ENCODE measurements at regions of chr17 and their contacts with region 1.

Region 1: GRCh38 chr17:59311130-59311920 is 20.1 kb upstream of the YPEL2 start:
- DNase-seq: peak; percentile 49 to 70
- H3K4me3 ChIP-seq: no peak overlapping the region
- H3K4me3 Mint-ChIP-seq: no peak overlapping the region
- H3K27ac Mint-ChIP-seq: no peak overlapping the region
- H3K4me1 ChIP-seq: no peaks in the 10 kb centered on the region
- H3K4me1 Mint-ChIP-seq: no peaks in the 10 kb centered on the region
- H3K27me3 ChIP-seq: no peaks in the 10 kb centered on the region
- H3K27me3 Mint-ChIP-seq: peaks cover 2% of the 10 kb centered on the region
- CTCF ChIP-seq: peak; percentile 83

Region 2: GRCh38 chr17:59220376-59221158 is 90.8 kb before region 1 on chr17 and contains the start of gene GDPD1:
- CTCF ChIA-PET with region 1: interaction called, 5 read pairs
- POLR2A ChIA-PET with region 1: no interaction called
- intact Hi-C with region 1: loop called (anchors 1 kb)
- DNase-seq: peak; percentile 95 to 99
- H3K4me3 ChIP-seq: peak within 1 kb of the TSS; percentile 51
- H3K4me3 Mint-ChIP-seq: peak within 1 kb of the TSS; percentile 95
- H3K27ac Mint-ChIP-seq: peak within 1 kb of the TSS; percentile 88
- H3K4me1 ChIP-seq: no peaks in the 10 kb centered on the region
- H3K4me1 Mint-ChIP-seq: no peaks in the 10 kb centered on the region
- H3K27me3 ChIP-seq: no peaks in the 10 kb centered on the region
- H3K27me3 Mint-ChIP-seq: no peaks in the 10 kb centered on the region
- CTCF ChIP-seq: peak; percentile 53 to 54
- total RNA-seq, gene GDPD1: 1.2 and 2.9 TPM in 2 replicates

Region 3: DNA sequence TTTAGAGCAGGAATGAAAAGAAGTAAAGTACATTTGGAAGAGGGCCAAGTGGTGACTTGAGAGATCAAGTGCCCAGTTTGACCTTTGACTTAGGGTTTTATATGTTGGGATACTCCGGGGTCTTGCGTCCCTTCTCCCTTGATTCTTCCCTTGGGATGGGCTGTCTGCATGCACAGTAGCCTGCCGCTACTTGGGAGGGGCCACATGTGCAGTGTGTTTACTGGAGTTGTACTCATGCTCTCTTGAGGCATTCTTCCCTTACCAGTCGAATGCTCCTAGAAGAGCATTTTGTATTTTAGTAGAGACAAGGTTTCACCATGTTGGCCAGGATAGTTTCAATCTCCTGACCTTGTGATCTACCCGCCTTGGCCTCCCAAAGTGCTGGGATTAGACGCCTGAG is 67.2 kb before region 1 on chr17:
- CTCF ChIA-PET with region 1: interaction called, 12 read pairs
- POLR2A ChIA-PET with region 1: no interaction called
- intact Hi-C with region 1: no loop called
- DNase-seq: no peak
- H3K4me3 ChIP-seq: no peak overlapping the region
- H3K4me3 Mint-ChIP-seq: no peak overlapping the region
- H3K27ac Mint-ChIP-seq: no peak overlapping the region
- H3K4me1 ChIP-seq: no peaks in the 10 kb centered on the region
- H3K4me1 Mint-ChIP-seq: no peaks in the 10 kb centered on the region
- H3K27me3 ChIP-seq: no peaks in the 10 kb centered on the region
- H3K27me3 Mint-ChIP-seq: peaks cover 3% of the 10 kb centered on the region
- CTCF ChIP-seq: no peak

Region 4: DNA sequence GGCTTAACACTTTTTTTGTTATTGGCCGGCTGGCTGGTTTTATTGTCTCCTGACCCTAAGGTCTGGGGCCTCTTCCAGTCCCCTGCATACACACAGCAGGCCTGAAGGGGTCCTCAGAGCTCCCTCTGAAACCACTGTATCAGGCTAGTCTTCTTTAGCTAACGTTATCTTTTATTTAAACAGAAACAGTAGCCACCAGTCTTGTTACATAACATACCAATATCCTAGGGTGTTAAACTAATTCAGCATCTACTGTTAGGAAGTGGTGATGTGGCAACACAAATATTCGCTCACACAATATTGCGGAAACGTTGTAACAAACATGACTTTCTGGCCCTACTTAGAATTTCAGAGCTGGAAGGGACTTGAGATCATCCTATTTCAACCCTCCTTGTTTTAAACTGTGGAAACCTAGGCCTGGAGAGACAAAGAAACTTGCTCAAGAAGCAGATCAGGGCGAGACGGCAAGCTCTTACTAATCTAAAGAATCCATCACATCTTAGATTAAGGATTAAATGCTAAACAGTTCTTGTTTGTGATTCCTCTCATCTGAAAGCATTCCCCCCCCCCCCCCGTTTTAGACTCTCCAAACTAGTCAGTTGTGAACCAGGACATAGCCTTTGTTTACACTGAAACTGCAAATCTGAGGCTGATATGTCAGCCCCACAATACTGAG is 18.5 kb after region 1 on chr17:
- CTCF ChIA-PET with region 1: interaction called, 26 read pairs
- POLR2A ChIA-PET with region 1: interaction called, 3 read pairs
- intact Hi-C with region 1: loop called (anchors 1 kb)
- DNase-seq: peak; percentile 80 to 82
- H3K4me3 ChIP-seq: peak overlapping the region; percentile 90
- H3K4me3 Mint-ChIP-seq: peak overlapping the region; percentile 73
- H3K27ac Mint-ChIP-seq: peak overlapping the region; percentile 29
- H3K4me1 ChIP-seq: peaks cover 21% of the 10 kb centered on the region
- H3K4me1 Mint-ChIP-seq: peaks cover 26% of the 10 kb centered on the region
- H3K27me3 ChIP-seq: no peaks in the 10 kb centered on the region
- H3K27me3 Mint-ChIP-seq: peaks cover 4% of the 10 kb centered on the region
- CTCF ChIP-seq: peak; percentile 89 to 92

Region 5: DNA sequence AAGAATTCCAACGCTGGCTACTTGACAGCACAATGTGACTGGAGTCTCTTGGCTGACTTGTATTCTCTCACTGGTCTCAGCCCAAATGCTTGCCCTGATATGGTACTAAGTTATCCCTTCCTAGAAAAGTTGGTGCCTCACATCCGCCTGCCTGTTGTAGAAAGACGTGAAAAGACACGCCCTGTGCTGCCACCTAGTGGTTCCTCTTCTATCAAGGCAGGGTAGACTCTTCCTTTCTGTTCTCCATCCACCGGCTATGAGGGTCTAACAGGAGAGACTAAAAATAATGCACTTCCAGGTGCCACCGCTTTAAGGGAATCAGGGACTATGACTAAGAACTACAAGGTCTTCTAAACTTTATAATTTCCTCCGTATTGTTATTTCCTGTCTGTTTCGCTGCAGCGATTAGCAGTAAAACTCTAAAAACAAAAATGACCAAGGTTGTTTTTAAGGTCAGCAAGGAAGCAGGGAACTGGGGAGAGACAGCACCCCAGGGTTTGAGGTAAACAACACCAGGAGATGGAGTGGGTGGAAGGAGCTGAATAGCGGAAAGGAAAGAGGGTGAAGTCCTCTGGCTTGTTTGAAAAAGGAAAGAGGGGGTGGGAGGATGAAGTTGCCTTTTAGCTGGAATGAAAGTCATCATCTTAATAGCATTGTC is 129.6 kb after region 1 on chr17:
- CTCF ChIA-PET with region 1: interaction called, 29 read pairs
- POLR2A ChIA-PET with region 1: no interaction called
- intact Hi-C with region 1: loop called (anchors 1 kb)
- DNase-seq: peak; percentile 87 to 89
- H3K4me3 ChIP-seq: no peak overlapping the region
- H3K4me3 Mint-ChIP-seq: no peak overlapping the region
- H3K27ac Mint-ChIP-seq: no peak overlapping the region
- H3K4me1 ChIP-seq: no peaks in the 10 kb centered on the region
- H3K4me1 Mint-ChIP-seq: peaks cover 7% of the 10 kb centered on the region
- H3K27me3 ChIP-seq: no peaks in the 10 kb centered on the region
- H3K27me3 Mint-ChIP-seq: no peaks in the 10 kb centered on the region
- CTCF ChIP-seq: peak; percentile 82 to 90

Region 6: DNA sequence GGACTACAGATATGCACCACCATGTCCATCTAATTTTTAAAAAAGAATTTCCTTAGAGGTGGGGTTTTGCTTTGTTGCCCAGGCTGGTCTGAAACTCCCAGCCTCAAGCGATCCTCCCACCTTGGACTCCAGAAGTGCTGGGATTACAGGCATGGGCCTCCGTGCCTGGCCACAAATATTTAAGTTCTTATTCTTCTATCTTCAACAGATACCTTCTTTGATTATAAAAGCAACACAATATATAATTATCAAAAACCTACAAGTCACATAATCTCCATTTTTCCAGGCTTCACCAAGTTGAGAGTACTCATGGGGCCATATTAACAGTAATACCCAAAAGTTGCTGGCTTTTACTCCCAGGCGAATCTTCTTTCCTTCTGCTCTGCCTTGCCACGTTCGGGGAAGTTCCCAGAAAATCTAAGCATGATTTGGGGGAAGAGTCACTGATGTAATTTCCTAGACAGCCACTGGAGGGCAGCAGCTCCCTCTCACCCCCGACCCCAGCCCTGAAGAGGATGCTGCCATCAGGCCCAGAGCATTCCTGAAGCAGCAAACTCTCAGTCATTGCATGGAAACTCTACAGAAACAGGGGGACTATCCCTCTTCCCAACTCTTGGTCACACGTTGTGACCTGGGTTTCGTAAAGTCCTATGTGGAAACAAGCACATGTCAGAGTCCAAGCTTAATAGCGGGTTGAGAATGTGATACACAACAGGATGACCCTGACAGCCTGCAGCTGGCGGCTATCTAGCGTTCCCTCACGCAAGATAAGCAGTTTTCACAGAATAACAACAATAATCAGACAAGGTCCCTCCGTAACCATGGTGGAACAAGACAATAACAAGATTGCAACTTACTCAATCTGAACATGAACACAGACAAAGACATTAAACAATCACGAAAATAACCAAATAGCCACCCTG is 210.1 kb after region 1 on chr17:
- CTCF ChIA-PET with region 1: interaction called, 5 read pairs
- POLR2A ChIA-PET with region 1: no interaction called
- intact Hi-C with region 1: loop called (anchors 1 kb)
- DNase-seq: peak; percentile 63 to 78
- H3K4me3 ChIP-seq: no peak overlapping the region
- H3K4me3 Mint-ChIP-seq: peak overlapping the region; percentile 37
- H3K27ac Mint-ChIP-seq: no peak overlapping the region
- H3K4me1 ChIP-seq: no peaks in the 10 kb centered on the region
- H3K4me1 Mint-ChIP-seq: peaks cover 22% of the 10 kb centered on the region
- H3K27me3 ChIP-seq: no peaks in the 10 kb centered on the region
- H3K27me3 Mint-ChIP-seq: peaks cover 5% of the 10 kb centered on the region
- CTCF ChIP-seq: peak; percentile 81 to 87

Region 7: DNA sequence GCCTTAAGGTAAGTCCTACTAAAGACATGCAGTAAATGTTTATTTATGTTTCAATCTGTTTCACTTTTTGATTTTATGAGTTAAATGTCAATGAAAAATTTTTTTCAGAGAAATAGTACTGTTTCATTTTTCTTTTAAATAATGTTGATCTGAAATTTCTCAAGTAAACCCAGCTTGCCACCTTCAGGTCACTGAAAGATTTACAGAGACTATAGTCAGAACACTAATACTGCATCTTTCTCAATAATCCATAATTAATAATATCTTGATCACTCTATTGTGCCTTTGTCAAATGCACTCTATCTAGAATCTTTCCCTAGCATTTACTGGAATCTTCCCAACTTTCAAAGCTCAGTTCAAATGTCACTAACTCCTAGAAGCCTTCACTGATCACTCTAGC is 247.7 kb after region 1 on chr17:
- CTCF ChIA-PET with region 1: interaction called, 5 read pairs
- POLR2A ChIA-PET with region 1: no interaction called
- intact Hi-C with region 1: loop called (anchors 1 kb)
- DNase-seq: no peak
- H3K4me3 ChIP-seq: no peak overlapping the region
- H3K4me3 Mint-ChIP-seq: no peak overlapping the region
- H3K27ac Mint-ChIP-seq: no peak overlapping the region
- H3K4me1 ChIP-seq: no peaks in the 10 kb centered on the region
- H3K4me1 Mint-ChIP-seq: peaks cover 6% of the 10 kb centered on the region
- H3K27me3 ChIP-seq: no peaks in the 10 kb centered on the region; the same call in 1 of the 2 replicates
- H3K27me3 Mint-ChIP-seq: peaks cover 9% of the 10 kb centered on the region
- CTCF ChIP-seq: peak; percentile 7 to 9